Activated CD4-positive, alpha-beta T cell treated with anti-CD3 and anti-CD28 coated beads, Interleukin-2, amount 10 ng/mL, durations not matched to agents 7 days and 5 days (primary cell): ENCODE measurements at regions of chr14 and their contacts with region 1.

Region 1: DNA sequence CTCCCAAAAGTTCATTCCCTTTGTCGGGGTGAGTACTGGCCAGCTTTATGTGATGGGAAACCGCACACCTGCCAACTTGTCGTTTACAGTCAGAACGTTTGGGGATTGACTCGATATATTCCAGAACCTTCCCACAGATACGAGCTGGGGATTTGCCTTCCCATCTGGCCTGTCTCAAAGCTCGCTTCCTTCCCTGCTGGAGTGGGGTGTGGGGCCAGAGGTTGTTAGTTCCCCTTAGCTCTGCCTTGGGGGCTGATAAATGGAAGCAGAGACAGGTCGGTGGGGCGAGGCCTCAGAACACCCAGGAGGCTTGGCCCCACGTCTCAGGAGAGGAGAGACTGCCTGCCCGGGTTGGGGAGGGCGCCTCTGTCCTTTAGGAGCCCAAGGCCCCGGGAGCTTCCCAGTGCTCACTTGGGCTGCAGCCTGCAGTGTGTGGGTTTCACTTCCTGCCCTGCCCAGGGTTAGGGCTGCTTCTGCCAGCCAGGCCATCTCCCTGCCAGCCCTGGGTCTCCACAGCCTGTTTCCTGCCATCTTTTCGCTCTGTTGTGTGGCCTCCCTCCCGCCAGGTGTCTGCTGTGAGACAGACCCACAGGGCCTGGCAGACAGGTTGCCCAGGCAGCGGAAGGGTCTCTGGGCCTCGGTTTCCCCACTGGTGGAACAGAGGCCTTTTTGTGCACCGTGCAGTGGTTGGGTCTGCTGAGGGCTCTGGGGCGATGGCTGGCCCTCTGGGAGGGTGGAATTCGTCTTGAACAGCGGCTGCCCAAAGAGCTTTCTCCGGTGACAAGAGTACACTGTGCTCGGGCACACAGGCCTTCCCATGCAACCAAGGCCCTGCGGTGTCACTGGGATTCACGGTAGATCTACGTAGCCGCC is 8.1 kb upstream of the TEX22 start:
- DNase-seq: peak; percentile 37
- H3K4me3 Mint-ChIP-seq: no peak overlapping the region
- H3K27ac Mint-ChIP-seq: peak overlapping the region; percentile 87
- H3K4me1 Mint-ChIP-seq: peaks cover 12% of the 10 kb centered on the region
- H3K27me3 Mint-ChIP-seq: no peaks in the 10 kb centered on the region

Region 2: GRCh38 chr14:105090493-105091053 is 299.6 kb before region 1 on chr14:
- CTCF ChIA-PET with region 1: no interaction called
- POLR2A ChIA-PET with region 1: no interaction called
- DNase-seq: peak; percentile 89
- H3K4me3 Mint-ChIP-seq: no peak overlapping the region
- H3K27ac Mint-ChIP-seq: peak overlapping the region; percentile 68
- H3K4me1 Mint-ChIP-seq: peaks cover 34% of the 10 kb centered on the region
- H3K27me3 Mint-ChIP-seq: peaks cover 8% of the 10 kb centered on the region

Region 3: DNA sequence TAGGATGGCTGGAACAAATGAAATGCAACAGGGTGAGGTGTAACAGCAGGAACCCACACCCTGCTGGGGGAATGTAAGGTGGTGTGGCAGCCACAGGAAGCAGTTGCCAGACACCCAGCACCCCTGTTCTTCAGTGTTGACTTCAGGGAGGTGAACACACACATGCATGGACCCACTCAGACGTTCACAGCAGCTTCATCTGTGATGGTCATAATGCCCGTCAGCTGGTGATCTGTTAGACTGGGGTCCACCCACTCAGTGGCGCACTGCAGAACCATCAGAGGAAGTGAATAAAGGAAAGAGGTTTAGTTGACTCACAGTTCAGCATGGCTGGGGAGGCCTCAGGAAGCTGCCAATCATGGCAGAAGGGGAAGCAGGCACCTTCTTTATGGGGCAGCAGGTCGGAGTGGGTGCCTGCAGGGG is 14.6 kb before region 1 on chr14:
- CTCF ChIA-PET with region 1: interaction called, 10 read pairs
- POLR2A ChIA-PET with region 1: no interaction called
- DNase-seq: peak; percentile 38
- H3K4me3 Mint-ChIP-seq: no peak overlapping the region
- H3K27ac Mint-ChIP-seq: peak overlapping the region; percentile 86
- H3K4me1 Mint-ChIP-seq: peaks cover 20% of the 10 kb centered on the region
- H3K27me3 Mint-ChIP-seq: no peaks in the 10 kb centered on the region

Region 4: DNA sequence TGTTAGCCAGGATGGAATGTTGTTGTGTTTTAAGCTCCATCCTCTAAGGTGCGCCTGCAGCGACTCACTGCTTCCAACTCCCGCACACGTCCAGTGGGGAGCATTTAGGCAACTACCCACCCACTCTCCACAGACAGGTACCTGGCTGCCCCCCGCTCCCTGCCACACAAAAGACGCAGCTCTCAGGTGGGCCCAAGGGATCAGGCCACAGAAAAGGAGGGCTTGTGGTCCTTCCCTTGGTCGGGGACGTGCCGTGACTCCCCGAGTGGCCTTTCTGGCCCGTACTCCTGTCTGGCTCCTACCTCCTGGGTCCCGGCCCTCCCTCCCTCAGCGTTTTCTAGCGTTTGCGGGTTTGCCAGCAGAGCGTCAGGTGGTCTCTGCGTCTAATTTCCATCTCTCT is 117.0 kb after region 1 on chr14:
- CTCF ChIA-PET with region 1: no interaction called
- POLR2A ChIA-PET with region 1: no interaction called
- DNase-seq: no peak
- H3K4me3 Mint-ChIP-seq: no peak overlapping the region
- H3K27ac Mint-ChIP-seq: no peak overlapping the region
- H3K4me1 Mint-ChIP-seq: peaks cover 8% of the 10 kb centered on the region
- H3K27me3 Mint-ChIP-seq: peaks cover 18% of the 10 kb centered on the region